ENCODE measurements at regions of chr17 and their contacts with region 1.

Region 1: DNA sequence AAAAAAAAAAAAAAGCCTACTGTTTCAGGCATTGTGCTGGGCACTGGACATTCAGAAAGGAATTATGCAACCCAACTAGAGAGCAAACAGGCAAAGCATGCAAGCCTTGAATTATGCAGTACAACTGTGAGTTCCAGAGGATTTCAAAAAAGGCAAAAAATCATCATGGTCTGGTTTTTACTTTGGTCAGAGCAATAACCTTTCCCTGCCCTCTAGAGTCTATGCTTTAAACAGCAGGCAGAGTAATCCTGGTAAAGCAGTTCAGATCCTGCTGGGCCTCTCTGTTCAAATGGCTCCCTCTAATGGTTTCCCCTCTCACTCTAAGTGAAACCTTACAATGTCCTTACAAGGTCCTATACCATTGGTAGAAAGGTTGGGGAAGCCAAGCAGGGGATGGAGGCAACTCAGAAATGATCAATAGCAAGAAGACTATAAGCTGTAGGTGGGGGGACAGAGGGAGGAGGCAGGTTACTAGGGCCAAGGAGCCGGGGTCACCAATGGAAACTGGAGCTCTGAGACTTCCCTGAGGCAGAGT is 4.6 kb upstream of the TAF15 start:
- DNase-seq: no peak
- H3K4me3 ChIP-seq: no peak overlapping the region
- H3K27ac ChIP-seq: peak overlapping the region; percentile 61 to 74 (median 66)
- H3K4me1 ChIP-seq: peaks cover 32 to 53% (median 50%) of the 10 kb centered on the region in 4 donors
- H3K27me3 ChIP-seq: no peaks in the 10 kb centered on the region
- CTCF ChIP-seq: peak; percentile 90 to 99 (median 91)
- EP300 ChIP-seq: no peak
- POLR2A ChIP-seq: no peak

Region 2: DNA sequence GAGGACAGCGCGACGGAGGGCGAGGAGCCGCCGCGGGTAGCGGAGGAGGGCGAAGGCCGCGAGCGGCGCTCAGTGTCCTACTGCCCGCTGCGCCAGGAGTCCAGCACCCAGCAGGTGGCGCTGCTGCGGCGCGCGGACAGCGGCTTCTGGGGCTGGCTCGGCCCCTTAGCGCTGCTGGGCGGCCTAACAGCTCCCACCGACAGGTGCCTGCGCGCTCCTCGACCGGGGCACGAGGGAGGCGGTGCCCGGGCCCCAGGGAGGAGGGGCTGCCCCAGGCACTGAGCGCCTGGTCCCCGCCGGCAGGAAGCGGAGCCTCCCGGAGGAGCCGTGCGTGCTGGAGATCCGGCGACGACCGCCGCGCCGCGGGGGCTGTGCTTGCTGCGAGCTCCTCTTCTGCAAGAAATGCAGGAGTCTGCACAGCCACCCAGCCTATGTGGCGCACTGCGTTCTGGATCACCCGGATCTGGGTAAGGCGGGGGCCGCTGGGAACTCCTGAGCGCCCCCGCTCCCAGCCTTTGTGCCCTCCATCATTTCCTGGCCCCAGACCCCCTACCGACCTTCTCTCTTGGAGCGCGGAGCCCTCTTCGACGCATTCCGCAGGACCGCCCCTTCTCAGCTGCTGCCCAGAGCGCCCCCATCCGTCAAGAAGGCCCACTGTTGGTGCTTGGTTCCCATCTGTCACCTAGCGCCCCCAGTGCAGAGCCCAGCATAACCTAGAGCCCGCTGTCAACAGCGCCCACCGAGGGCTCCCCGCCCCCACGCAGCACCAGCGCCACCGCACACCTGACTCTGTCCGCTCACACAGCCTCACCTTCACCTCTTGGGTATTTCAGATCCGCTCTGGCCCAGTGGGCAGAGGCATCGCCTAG is 40.4 kb before region 1 on chr17:
- intact Hi-C with region 1: loop called (anchors 1 kb)
- DNase-seq: peak; percentile 95
- H3K4me3 ChIP-seq: peak overlapping the region; percentile 54 to 64 (median 56)
- H3K27ac ChIP-seq: peak overlapping the region; percentile 62 to 79 (median 66)
- H3K4me1 ChIP-seq: peaks cover 10 to 46% (median 40%) of the 10 kb centered on the region in 4 donors
- H3K27me3 ChIP-seq: no peaks in the 10 kb centered on the region
- CTCF ChIP-seq: peak; percentile 95 to 98 (median 96)
- EP300 ChIP-seq: no peak
- POLR2A ChIP-seq: no peak

Region 3: DNA sequence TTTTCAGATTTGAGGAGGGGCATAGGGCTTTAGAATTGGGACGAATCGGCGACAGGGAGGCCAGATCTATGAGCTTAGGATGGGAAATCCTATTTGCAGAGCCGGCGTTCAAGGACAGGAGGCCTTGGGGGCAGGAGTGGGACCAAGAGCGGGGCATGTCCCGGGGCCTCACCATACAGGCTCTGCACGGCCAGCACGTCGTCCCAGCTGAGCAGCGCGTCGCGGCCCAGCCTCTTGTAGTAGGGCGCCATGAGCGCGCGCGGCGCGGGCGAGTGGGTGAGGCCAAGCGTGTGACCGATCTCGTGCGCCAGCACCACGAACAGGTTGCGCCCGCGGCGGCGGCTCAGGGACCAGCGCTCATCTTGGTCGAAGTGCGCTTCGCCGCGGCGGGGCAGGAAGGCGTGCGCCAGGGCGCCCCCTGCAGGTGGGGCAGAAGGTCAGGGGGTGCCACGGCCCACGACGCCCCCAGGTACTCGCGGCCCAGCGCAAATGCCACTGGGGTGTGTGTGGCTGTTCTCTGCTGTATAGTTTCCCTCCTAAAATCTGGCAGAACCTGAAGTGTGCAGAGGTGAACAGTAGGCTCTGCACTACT is 34.7 kb before region 1 on chr17:
- intact Hi-C with region 1: loop called (anchors 1 kb)
- DNase-seq: no peak
- H3K4me3 ChIP-seq: no peak overlapping the region
- H3K27ac ChIP-seq: no peak overlapping the region
- H3K4me1 ChIP-seq: peaks cover 17 to 65% (median 49%) of the 10 kb centered on the region in 4 donors
- H3K27me3 ChIP-seq: no peaks in the 10 kb centered on the region
- CTCF ChIP-seq: no peak
- EP300 ChIP-seq: no peak
- POLR2A ChIP-seq: no peak

Measured in esophagus muscularis mucosa (tissue), 4 donors.